ENCODE measurements at regions of chr7 and their contacts with region 1.

Region 1: DNA sequence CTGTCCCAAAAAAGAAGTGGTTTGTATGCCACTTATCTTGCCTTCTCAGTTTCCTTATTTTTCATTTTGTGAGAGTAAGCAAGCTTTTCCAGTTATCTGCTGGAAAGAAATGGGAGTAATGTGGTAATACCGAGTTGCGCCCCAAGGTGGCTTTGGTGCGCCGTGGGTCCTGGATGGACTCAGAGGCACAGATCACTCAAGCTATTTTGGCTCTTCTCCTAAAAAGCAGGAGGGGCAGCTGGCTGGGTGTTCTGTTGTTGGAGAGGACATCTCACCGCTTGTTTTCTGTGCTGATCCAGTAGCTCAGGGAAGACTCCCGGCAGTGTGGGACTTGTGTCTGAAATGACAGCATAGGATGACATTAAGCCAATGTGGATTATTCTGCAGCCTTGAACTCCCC is 16.4 kb downstream of the PRKRIP1 start:
- DNase-seq: no peak
- CTCF ChIP-seq: peak; percentile 46

Region 2: DNA sequence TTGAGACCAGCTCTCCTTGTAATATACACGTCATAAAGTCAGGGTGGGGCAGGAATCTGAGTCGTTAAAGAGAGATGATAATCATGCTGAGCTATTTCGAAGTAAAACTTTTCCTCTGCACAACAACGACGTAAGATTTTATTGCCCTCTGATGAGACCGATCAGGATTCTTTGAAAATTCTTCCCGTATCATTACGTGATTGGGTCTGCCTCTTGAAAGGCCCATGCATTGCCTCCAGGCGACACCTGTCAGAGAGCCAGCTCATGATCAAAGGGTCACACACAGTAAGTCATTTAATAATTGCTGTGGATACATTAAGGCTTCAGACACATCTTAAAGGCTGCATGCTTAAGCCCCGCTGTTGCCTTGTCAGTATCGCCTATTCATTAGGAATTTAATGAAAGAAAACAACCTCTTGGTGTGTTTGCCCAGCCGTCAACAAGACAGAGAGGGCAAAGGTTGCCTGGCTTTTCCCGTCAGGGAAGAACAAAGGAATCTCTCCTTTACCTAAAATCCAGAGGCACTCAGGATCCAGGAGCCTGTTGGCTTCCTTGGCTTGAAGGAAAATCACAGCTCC is 314.9 kb before region 1 on chr7:
- CTCF ChIA-PET with region 1: no interaction called
- POLR2A ChIA-PET with region 1: no interaction called
- DNase-seq: no peak
- CTCF ChIP-seq: no peak

Region 3: DNA sequence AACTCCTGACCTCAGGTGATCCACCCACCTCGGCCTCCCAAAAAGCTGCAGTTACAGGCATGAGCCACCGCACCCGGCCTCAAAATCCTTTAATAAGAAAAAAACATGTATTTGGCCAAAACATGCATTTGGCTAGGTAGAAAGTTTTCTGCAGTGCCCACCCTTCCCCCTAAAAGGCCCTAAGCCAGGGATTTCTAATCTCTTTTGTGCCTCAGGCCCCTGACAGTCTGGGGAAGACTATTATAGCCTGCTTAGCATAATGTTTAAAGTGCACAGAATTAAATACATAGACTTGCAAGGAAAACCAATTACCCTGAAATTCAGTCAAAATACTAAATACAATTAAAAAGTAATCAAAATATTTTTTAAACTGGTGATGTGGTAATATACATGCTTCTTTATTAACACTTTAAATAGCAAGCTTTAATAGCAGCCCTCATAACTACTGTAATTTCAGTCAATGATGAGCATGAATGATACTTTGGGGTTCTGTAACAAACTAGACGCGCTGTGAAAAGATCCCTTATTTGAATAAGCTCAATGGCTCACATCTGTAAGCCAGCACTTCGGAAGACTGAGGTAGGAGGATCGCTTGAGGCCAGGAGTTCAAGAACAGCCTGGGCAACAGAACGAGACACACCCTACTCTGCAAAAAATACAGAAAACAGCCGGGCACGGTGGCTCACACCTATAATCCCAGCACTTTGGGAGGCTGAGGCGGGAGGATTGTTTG is 86.2 kb before region 1 on chr7:
- CTCF ChIA-PET with region 1: no interaction called
- POLR2A ChIA-PET with region 1: no interaction called
- DNase-seq: no peak
- CTCF ChIP-seq: no peak

Region 4: GRCh38 chr7:102376964-102377466 is 35.5 kb before region 1 on chr7:
- CTCF ChIA-PET with region 1: no interaction called
- POLR2A ChIA-PET with region 1: no interaction called
- DNase-seq: no peak
- CTCF ChIP-seq: no peak

Region 5: GRCh38 chr7:102425639-102426267 is 13.2 kb after region 1 on chr7:
- CTCF ChIA-PET with region 1: interaction called, 19 read pairs
- POLR2A ChIA-PET with region 1: interaction called, 6 read pairs
- DNase-seq: peak; percentile 87
- CTCF ChIP-seq: no peak

Region 6: GRCh38 chr7:102433219-102434038 is 20.9 kb after region 1 on chr7 and contains the start of gene ORAI2:
- CTCF ChIA-PET with region 1: interaction called, 12 read pairs
- POLR2A ChIA-PET with region 1: interaction called, 5 read pairs
- DNase-seq: peak; percentile 90
- CTCF ChIP-seq: no peak

Region 7: DNA sequence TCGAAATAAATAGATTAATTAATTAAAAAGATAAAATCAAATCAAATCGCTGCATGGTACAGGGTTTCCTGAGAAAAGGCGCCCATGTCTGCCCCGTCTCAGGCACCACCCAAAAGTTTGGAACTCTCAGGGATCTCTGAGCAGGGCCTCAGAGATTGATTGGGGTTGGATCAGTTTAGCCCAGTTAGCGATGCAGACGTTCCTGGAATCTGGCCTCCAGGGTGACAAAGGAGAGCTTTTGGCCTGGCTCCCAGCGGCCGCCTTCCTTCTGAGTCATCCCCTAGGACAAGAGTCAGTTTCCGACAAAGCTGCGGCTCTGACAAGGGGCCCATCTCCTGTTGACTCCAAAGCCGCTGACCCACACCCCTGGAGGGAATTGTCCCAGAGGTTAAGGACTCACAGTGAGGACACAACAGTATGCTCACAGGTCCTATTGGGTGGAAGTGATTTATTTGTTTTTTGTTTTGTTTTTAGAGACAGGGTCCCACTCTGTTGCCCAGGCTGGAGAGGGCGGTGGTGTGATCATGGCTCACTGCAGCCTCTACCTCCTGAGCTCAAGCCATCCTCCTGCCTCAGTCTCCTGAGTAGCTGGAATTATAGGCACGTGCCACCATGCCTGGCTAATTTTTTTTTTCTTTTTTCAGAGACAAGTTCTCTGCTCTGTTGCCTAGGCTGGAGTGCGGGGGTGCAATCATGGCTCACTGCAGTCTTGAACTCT is 27.7 kb after region 1 on chr7:
- CTCF ChIA-PET with region 1: interaction called, 12 read pairs
- POLR2A ChIA-PET with region 1: interaction called, 3 read pairs
- DNase-seq: no peak
- CTCF ChIP-seq: no peak

Region 8: GRCh38 chr7:103059471-103059870 is 646.9 kb after region 1 on chr7:
- CTCF ChIA-PET with region 1: no interaction called
- POLR2A ChIA-PET with region 1: no interaction called
- DNase-seq: no peak
- CTCF ChIP-seq: no peak